K562 (cell line): ENCODE measurements at regions of chrX and their contacts with region 1.

Region 1: DNA sequence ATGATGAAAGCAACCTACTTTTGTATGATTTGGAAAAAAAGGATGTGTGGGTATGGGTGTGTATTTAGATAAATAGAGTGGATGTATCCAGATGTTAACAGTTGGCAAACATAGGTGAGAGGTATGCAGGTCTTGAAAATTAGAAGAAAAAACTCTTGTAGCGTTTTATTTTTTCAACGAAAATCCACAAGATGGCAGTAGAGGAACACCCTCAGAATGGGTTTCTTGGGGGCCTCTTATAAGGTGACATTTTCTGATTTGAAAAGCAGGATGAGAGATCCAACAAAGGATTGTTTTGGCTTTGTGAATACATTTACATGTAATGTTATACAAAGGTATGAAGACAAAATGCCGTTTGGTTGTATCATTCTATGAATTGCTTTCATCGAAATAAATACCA is 68.3 kb downstream of the FMR1NB start:
- DNase-seq: peak; percentile 10 to 35 (median 14)
- ATAC-seq: peak; percentile 48; the same call in 2 of the 3 replicates
- H3K4me3 ChIP-seq: no peak overlapping the region
- H3K27ac ChIP-seq: no peak overlapping the region
- H3K4me1 ChIP-seq: no peaks in the 10 kb centered on the region
- H3K27me3 ChIP-seq: no peaks in the 10 kb centered on the region
- CTCF ChIP-seq: peak; percentile 21 to 61 (median 23); a peak in 3 of 6 replicates
- EP300 ChIP-seq: no peak
- POLR2A ChIP-seq: no peak
- RAD21 ChIP-seq: peak; percentile 65 to 72

Region 2: GRCh38 chrX:147859666-147860065 is 189.8 kb before region 1 on chrX:
- CTCF ChIA-PET with region 1: no interaction called
- POLR2A ChIA-PET with region 1: no interaction called
- in situ Hi-C with region 1: no loop called
- intact Hi-C with region 1: no loop called
- DNase-seq: no peak
- ATAC-seq: no peak
- H3K4me3 ChIP-seq: no peak overlapping the region
- H3K27ac ChIP-seq: no peak overlapping the region
- H3K4me1 ChIP-seq: no peaks in the 10 kb centered on the region
- H3K27me3 ChIP-seq: no peaks in the 10 kb centered on the region
- CTCF ChIP-seq: no peak
- EP300 ChIP-seq: no peak
- POLR2A ChIP-seq: no peak
- RAD21 ChIP-seq: no peak

Region 3: GRCh38 chrX:148322906-148323305 is 273.5 kb after region 1 on chrX:
- CTCF ChIA-PET with region 1: no interaction called
- POLR2A ChIA-PET with region 1: no interaction called
- in situ Hi-C with region 1: no loop called
- intact Hi-C with region 1: no loop called
- DNase-seq: no peak
- ATAC-seq: no peak
- H3K4me3 ChIP-seq: no peak overlapping the region
- H3K27ac ChIP-seq: no peak overlapping the region
- H3K4me1 ChIP-seq: no peaks in the 10 kb centered on the region
- H3K27me3 ChIP-seq: no peaks in the 10 kb centered on the region
- CTCF ChIP-seq: no peak
- EP300 ChIP-seq: no peak
- POLR2A ChIP-seq: no peak
- RAD21 ChIP-seq: no peak

Region 4: GRCh38 chrX:149286940-149287349 is 1237.5 kb after region 1 on chrX:
- CTCF ChIA-PET with region 1: no interaction called
- POLR2A ChIA-PET with region 1: no interaction called
- in situ Hi-C with region 1: no loop called
- intact Hi-C with region 1: loop called (anchors 1 kb)
- DNase-seq: peak; percentile 31 to 42 (median 36)
- ATAC-seq: peak; percentile 61; the same call in 2 of the 3 replicates
- H3K4me3 ChIP-seq: no peak overlapping the region
- H3K27ac ChIP-seq: no peak overlapping the region
- H3K4me1 ChIP-seq: no peaks in the 10 kb centered on the region
- H3K27me3 ChIP-seq: no peaks in the 10 kb centered on the region
- CTCF ChIP-seq: peak; percentile 35 to 65 (median 55); a peak in 5 of 6 replicates
- EP300 ChIP-seq: no peak
- POLR2A ChIP-seq: no peak
- RAD21 ChIP-seq: peak; percentile 62 to 76

Region 5: GRCh38 chrX:149470955-149471354 is 1421.5 kb after region 1 on chrX:
- CTCF ChIA-PET with region 1: interaction called, 9 read pairs
- POLR2A ChIA-PET with region 1: no interaction called
- in situ Hi-C with region 1: no loop called
- intact Hi-C with region 1: loop called (anchors 1 kb)
- DNase-seq: peak; percentile 80 to 82 (median 80)
- ATAC-seq: peak; percentile 100
- H3K4me3 ChIP-seq: no peak overlapping the region
- H3K27ac ChIP-seq: no peak overlapping the region
- H3K4me1 ChIP-seq: peaks cover 0 to 4% of the 10 kb centered on the region in 2 experiments; a peak in 2 of 5 replicates
- H3K27me3 ChIP-seq: peaks cover 0 to 7% of the 10 kb centered on the region in 2 experiments; a peak in 1 of 5 replicates
- CTCF ChIP-seq: peak; percentile 89 to 92 (median 89)
- EP300 ChIP-seq: no peak
- POLR2A ChIP-seq: no peak
- RAD21 ChIP-seq: peak; percentile 88 to 94